ENCODE measurements at regions of chr12 and their contacts with region 1.

Region 1: DNA sequence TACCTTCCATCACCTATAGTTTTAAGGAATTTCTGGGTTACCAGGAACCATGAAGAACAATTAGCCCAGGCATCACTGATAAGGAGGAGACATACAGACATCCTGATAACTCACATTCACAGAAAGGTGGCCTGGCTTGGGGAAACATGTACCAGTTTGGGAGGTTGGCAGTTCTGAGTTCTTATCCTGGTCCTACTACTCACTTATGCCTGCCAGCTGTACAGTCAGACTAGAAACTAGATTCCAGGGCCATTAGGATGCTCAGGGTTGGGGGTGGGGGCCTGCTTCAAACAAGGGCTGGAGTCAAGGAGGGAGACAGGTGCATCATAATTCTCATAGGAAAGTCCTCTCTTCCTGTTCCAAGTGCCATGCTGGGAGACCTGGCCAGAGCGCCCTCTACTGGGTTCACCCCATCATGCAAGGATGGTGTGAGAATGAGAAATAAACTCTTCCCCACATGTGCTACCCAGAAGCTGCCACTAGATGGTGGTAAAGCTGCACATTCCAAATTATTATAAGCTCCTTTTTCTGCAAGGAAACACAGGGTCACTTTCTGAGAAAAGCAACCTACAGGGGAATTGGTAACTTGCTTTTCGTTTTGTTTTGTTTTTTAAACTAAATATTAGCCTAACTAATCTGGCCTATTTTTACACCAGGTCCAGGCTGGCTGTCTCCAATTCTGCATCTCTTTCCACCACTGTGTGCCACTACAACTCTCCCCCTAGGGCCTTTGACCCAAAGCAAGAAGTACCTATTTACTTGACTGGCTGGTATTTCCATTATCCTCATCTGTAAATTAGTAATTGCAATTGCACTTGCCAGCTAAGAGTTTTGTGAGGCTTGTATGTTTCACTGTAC is 14.5 kb downstream of the OAS2 start:
- DNase-seq: peak; percentile 73 to 84 (median 84)
- ATAC-seq: peak; percentile 83
- H3K4me3 ChIP-seq: no peak overlapping the region
- H3K27ac ChIP-seq: no peak overlapping the region
- H3K4me1 ChIP-seq: no peaks in the 10 kb centered on the region
- H3K27me3 ChIP-seq: no peaks in the 10 kb centered on the region
- CTCF ChIP-seq: peak; percentile 98 to 99 (median 99)
- EP300 ChIP-seq: no peak
- POLR2A ChIP-seq: no peak
- RAD21 ChIP-seq: peak; percentile 69 to 84

Region 2: GRCh38 chr12:113030875-113031525 is 38.2 kb after region 1 on chr12:
- CTCF ChIA-PET with region 1: interaction called, 8 read pairs
- POLR2A ChIA-PET with region 1: no interaction called
- in situ Hi-C with region 1: no loop called
- intact Hi-C with region 1: loop called (anchors 2 kb)
- DNase-seq: peak; percentile 22 to 42 (median 36)
- ATAC-seq: peak; percentile 77
- H3K4me3 ChIP-seq: no peak overlapping the region
- H3K27ac ChIP-seq: no peak overlapping the region
- H3K4me1 ChIP-seq: no peaks in the 10 kb centered on the region
- H3K27me3 ChIP-seq: no peaks in the 10 kb centered on the region
- CTCF ChIP-seq: peak; percentile 48 to 62 (median 58); a peak in 5 of 6 replicates
- EP300 ChIP-seq: no peak
- POLR2A ChIP-seq: no peak
- RAD21 ChIP-seq: peak; percentile 23 to 59; a peak in 2 of 4 replicates

Region 3: DNA sequence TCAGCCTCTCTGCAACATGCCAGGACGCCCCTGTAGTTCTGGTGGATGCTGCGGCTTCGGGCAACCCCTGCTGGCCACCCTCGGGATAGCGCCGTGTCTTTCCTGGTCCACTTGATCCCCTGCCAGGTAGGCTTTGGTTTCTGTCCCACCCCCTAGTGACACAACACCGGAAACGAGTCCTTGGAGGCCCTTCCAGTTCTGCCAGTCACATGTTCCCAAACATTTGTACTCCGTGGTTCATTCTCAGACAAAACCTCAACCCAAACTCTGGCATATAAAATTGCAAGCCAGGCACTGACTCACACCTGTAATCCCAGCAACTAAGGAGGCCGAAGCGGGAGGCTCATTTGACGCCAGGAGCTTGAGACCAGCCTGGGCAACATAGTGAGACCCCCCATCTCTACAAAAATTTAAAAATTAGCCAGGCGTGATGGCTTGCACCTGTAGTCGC is 105.7 kb after region 1 on chr12:
- CTCF ChIA-PET with region 1: interaction called, 6 read pairs
- POLR2A ChIA-PET with region 1: no interaction called
- in situ Hi-C with region 1: no loop called
- intact Hi-C with region 1: loop called (anchors 5 kb)
- DNase-seq: peak; percentile 78 to 87 (median 84)
- ATAC-seq: peak; percentile 92
- H3K4me3 ChIP-seq: no peak overlapping the region
- H3K27ac ChIP-seq: no peak overlapping the region
- H3K4me1 ChIP-seq: peaks cover 0 to 18% of the 10 kb centered on the region in 2 experiments; a peak in 3 of 5 replicates
- H3K27me3 ChIP-seq: peaks cover 0 to 24% of the 10 kb centered on the region in 2 experiments; a peak in 3 of 5 replicates
- CTCF ChIP-seq: peak; percentile 86 to 92 (median 87)
- EP300 ChIP-seq: no peak
- POLR2A ChIP-seq: no peak
- RAD21 ChIP-seq: peak; percentile 35 to 86; a peak in 3 of 4 replicates

Region 4: DNA sequence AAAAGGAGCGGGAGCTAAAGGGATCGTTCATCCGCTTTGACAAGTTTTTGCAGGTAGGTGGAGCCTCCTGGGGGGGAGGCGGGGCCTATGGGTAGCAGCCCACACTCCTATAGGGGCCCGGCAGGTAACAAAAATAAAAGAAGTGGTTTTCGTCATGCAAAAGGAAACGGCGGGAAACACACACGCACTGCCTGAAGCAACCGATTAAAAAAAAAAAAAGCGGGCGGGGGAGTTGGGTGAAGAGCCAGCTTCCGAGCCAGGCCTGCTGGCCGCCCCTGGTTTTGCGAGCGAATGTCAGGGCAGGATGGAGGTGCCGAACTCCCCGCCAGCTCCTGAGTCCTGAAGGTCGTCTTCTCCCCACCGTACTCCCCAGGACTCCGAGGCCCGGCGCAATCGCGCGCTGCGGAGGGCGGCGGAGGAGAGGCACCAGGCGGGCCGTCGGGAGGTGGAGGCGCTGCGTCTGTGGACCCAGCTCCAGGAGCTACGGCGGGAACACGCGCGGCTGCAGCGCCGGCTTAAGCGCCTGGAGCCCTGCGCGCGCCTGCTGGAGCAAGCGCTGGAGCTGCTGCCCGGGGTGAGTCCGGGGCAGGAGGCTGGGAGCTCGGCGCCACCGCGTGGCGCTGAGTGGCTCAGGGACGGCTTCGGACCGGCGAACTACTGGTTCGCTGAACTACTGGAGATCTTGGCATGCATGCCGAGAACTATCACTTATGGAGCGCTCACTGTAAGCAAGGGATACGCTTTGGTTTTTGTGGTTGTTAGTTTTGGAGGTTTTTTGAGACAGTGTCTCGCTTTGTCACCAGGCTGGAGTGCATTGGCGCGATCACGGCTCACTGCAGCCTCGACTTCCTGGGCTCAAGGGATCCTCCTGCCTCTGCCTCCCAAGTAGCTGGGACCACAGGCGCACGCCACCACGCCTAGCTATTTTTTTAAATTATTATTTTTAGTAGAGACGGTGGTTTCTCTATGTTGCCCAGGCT is 160.4 kb after region 1 on chr12:
- CTCF ChIA-PET with region 1: interaction called, 3 read pairs
- POLR2A ChIA-PET with region 1: no interaction called
- in situ Hi-C with region 1: no loop called
- intact Hi-C with region 1: loop called (anchors 5 kb)
- DNase-seq: peak; percentile 75 to 84 (median 80)
- ATAC-seq: peak; percentile 95
- H3K4me3 ChIP-seq: peak overlapping the region; percentile 42
- H3K27ac ChIP-seq: no peak overlapping the region
- H3K4me1 ChIP-seq: peaks cover 5 to 29% of the 10 kb centered on the region in 2 experiments; a peak in 3 of 5 replicates
- H3K27me3 ChIP-seq: peaks cover 18 to 32% of the 10 kb centered on the region in 2 experiments
- CTCF ChIP-seq: peak; percentile 67 to 75 (median 73)
- EP300 ChIP-seq: no peak
- POLR2A ChIP-seq: no peak
- RAD21 ChIP-seq: peak; percentile 51 to 82